Left ventricle myocardium inferior (tissue), 1 donor: ENCODE measurements at regions of chr6 and their contacts with region 1.

Region 1: DNA sequence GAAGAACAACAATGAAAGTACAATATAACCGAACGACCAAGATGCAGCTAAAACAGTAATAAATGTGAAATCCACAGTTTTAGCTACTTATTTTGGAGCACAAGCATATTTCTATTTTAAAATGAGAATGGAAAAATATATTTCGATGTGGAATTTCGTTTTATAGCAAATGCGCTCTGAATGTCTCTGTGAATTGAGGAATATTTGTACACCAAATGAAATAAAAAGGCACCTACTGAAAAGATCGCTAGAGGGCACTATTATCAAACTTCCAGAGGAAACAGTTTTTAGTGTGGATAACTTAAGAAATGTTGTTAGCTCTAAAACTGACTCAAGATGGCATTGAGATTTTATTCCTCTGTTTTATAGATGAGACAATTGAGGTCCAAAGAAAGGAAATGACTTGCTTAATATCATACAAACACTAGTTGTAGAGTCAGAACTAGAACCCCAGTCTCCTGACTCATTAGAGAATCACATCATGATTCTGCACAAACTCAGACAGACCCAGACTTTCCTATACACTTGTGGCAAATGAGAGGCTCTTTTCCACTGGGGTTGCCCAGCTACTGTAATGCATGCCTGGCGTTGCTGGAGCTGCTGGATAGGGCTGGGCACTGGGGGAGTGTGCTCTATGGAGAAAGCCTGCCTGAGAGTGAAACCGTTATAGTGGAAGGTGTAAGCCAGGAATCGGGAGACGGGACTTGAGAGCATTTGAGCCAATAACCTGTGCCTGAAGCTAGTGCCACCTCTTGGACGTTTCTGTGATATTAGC is 51.9 kb downstream of the GCLC start:
- DNase-seq: no peak
- H3K4me3 ChIP-seq: peak overlapping the region; percentile 43
- H3K27ac ChIP-seq: no peak overlapping the region
- H3K4me1 ChIP-seq: peaks cover 7% of the 10 kb centered on the region
- H3K27me3 ChIP-seq: no peaks in the 10 kb centered on the region
- CTCF ChIP-seq: peak; percentile 84

Region 2: GRCh38 chr6:53651764-53652401 is 158.8 kb after region 1 on chr6:
- intact Hi-C with region 1: loop called (anchors 5 kb)
- DNase-seq: peak; percentile 53
- H3K4me3 ChIP-seq: peak overlapping the region; percentile 65
- H3K27ac ChIP-seq: peak overlapping the region; percentile 31
- H3K4me1 ChIP-seq: peaks cover 83% of the 10 kb centered on the region
- H3K27me3 ChIP-seq: peaks cover 12% of the 10 kb centered on the region
- CTCF ChIP-seq: peak; percentile 23

Region 3: GRCh38 chr6:53725791-53726431 is 232.9 kb after region 1 on chr6:
- intact Hi-C with region 1: loop called (anchors 5 kb)
- DNase-seq: peak; percentile 73
- H3K4me3 ChIP-seq: no peak overlapping the region
- H3K27ac ChIP-seq: no peak overlapping the region
- H3K4me1 ChIP-seq: no peaks in the 10 kb centered on the region
- H3K27me3 ChIP-seq: peaks cover 7% of the 10 kb centered on the region
- CTCF ChIP-seq: peak; percentile 98